HCT116 (cell line): ENCODE measurements at regions of chr11 and their contacts with region 1.

Region 1: DNA sequence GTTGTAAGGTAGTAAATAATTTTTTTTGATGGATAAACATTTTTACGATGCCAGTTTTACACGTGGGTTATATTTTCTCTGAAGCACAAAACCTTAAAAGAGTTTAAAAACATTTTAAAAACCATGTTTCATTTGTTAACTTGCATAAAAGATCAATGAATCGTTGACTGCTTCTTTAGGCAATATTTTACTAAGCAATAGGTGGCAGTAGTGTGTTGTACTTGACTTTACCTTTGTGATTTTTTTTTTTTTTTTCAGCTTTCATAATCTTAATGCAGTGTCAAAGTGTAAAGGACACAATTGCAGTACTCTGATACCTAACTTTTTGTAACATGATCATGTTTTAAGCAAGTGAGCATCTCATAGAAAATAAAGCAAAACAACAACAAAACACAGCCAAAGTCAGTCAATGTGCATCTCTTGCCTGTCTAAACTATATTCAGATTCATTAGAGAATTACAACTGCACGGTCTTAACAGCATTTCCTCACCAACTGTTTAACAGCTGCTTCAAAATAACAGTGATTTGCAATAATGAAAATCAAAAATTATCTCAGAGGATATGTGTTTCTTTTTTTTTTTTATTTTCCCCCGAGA is 27.7 kb downstream of the DNAJC24 start:
- DNase-seq: no peak
- ATAC-seq: no peak
- H3K4me3 ChIP-seq: no peak overlapping the region
- H3K27ac ChIP-seq: no peak overlapping the region
- H3K4me1 ChIP-seq: no peaks in the 10 kb centered on the region
- H3K27me3 ChIP-seq: no peaks in the 10 kb centered on the region
- CTCF ChIP-seq: peak; percentile 37 to 72 (median 51); a peak in 4 of 6 replicates
- POLR2A ChIP-seq: no peak
- RAD21 ChIP-seq: peak; percentile 59

Region 2: GRCh38 chr11:31340903-31341572 is 56.3 kb before region 1 on chr11:
- CTCF ChIA-PET with region 1: no interaction called
- POLR2A ChIA-PET with region 1: no interaction called
- RAD21 ChIA-PET with region 1: no interaction called
- intact Hi-C with region 1: no loop called
- DNase-seq: peak; percentile 26
- ATAC-seq: peak; percentile 75
- H3K4me3 ChIP-seq: no peak overlapping the region
- H3K27ac ChIP-seq: no peak overlapping the region
- H3K4me1 ChIP-seq: no peaks in the 10 kb centered on the region
- H3K27me3 ChIP-seq: no peaks in the 10 kb centered on the region
- CTCF ChIP-seq: peak; percentile 41 to 78 (median 75); a peak in 5 of 6 replicates
- POLR2A ChIP-seq: no peak
- RAD21 ChIP-seq: peak; percentile 30; the same call in 1 of the 2 replicates

Region 3: GRCh38 chr11:31375879-31376278 is 21.5 kb before region 1 on chr11:
- CTCF ChIA-PET with region 1: no interaction called
- POLR2A ChIA-PET with region 1: no interaction called
- RAD21 ChIA-PET with region 1: no interaction called
- intact Hi-C with region 1: no loop called
- DNase-seq: no peak
- ATAC-seq: no peak
- H3K4me3 ChIP-seq: no peak overlapping the region
- H3K27ac ChIP-seq: no peak overlapping the region
- H3K4me1 ChIP-seq: 0 out of 4 replicates have a peak, but pooled peaks cover 0 to 1% of the 10 kb centered on the region in 2 experiments
- H3K27me3 ChIP-seq: no peaks in the 10 kb centered on the region
- CTCF ChIP-seq: no peak
- POLR2A ChIP-seq: no peak
- RAD21 ChIP-seq: no peak

Region 4: GRCh38 chr11:31474083-31474482 is 76.7 kb after region 1 on chr11:
- CTCF ChIA-PET with region 1: no interaction called
- POLR2A ChIA-PET with region 1: no interaction called
- RAD21 ChIA-PET with region 1: no interaction called
- intact Hi-C with region 1: no loop called
- DNase-seq: no peak
- ATAC-seq: no peak
- H3K4me3 ChIP-seq: no peak overlapping the region
- H3K27ac ChIP-seq: no peak overlapping the region
- H3K4me1 ChIP-seq: no peaks in the 10 kb centered on the region
- H3K27me3 ChIP-seq: no peaks in the 10 kb centered on the region
- CTCF ChIP-seq: no peak
- POLR2A ChIP-seq: no peak
- RAD21 ChIP-seq: no peak

Region 5: DNA sequence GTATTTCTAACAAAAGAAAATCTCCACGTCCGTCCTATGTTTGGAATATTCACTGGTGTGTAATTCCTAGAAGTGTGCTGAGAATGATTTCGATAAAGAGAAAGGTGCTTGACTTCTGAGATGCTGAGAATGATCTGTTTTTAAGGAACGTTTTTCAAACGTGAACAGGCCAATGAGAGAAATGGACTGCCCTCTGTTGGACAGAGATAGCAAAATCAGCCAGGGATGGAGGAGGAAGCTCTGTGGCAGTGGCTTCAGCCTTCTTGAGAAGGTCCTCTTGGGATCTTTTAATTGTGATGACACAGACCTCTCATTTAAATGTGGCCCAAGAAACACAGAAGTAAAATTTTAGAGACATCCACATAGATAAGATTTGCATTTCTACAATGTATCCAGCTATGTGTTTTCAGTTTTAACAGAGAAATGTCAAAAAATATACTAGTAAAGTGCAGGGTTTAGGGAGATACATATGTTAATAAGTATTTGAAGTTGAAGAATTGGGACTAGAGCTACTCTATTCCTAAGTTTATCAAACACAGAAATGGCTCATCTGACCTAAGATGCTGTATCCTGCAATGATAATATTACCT is 609.6 kb after region 1 on chr11:
- CTCF ChIA-PET with region 1: no interaction called
- POLR2A ChIA-PET with region 1: no interaction called
- RAD21 ChIA-PET with region 1: no interaction called
- intact Hi-C with region 1: loop called (anchors 5 kb)
- DNase-seq: peak; percentile 35
- ATAC-seq: peak; percentile 93
- H3K4me3 ChIP-seq: no peak overlapping the region
- H3K27ac ChIP-seq: no peak overlapping the region
- H3K4me1 ChIP-seq: no peaks in the 10 kb centered on the region
- H3K27me3 ChIP-seq: peaks cover 34% of the 10 kb centered on the region
- CTCF ChIP-seq: peak; percentile 46 to 77 (median 73); a peak in 5 of 6 replicates
- POLR2A ChIP-seq: no peak
- RAD21 ChIP-seq: peak; percentile 56